Left ventricle myocardium inferior (tissue), 1 donor: ENCODE measurements at regions of chr3 and their contacts with region 1.

Region 1: GRCh38 chr3:111859974-111860859 is 1.2 kb downstream of the PHLDB2 start:
- DNase-seq: peak; percentile 76
- H3K4me3 ChIP-seq: peak overlapping the region; percentile 77
- H3K27ac ChIP-seq: peak overlapping the region; percentile 94
- H3K4me1 ChIP-seq: peaks cover 73% of the 10 kb centered on the region
- H3K27me3 ChIP-seq: no peaks in the 10 kb centered on the region
- CTCF ChIP-seq: peak; percentile 78

Region 2: DNA sequence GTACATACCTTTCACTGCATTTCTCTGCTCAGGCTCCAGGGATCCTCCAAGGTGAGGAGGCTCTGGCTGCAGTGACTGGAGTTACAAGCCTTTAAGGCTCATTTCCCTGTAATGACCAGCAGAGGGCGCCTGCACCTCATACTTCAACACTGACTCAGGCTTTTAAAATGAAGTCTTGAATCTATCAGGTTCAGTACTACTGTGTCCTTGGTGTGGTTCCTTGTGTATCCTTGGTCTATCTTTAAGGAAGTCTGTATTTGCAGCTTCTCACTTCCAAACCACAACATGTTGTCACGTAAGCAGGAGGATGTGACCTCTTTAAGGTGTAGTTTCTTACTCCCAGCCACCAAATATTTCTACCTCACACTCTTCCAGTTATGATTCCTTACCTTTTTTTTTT is 142.6 kb before region 1 on chr3:
- intact Hi-C with region 1: loop called (anchors 5 kb)
- DNase-seq: peak; percentile 60
- H3K4me3 ChIP-seq: no peak overlapping the region
- H3K27ac ChIP-seq: peak overlapping the region; percentile 67
- H3K4me1 ChIP-seq: peaks cover 49% of the 10 kb centered on the region
- H3K27me3 ChIP-seq: no peaks in the 10 kb centered on the region
- CTCF ChIP-seq: peak; percentile 98

Region 3: GRCh38 chr3:111737706-111738086 is 122.5 kb before region 1 on chr3:
- intact Hi-C with region 1: loop called (anchors 5 kb)
- DNase-seq: peak; percentile 31
- H3K4me3 ChIP-seq: no peak overlapping the region
- H3K27ac ChIP-seq: peak overlapping the region; percentile 92
- H3K4me1 ChIP-seq: peaks cover 70% of the 10 kb centered on the region
- H3K27me3 ChIP-seq: no peaks in the 10 kb centered on the region
- CTCF ChIP-seq: no peak

Region 4: DNA sequence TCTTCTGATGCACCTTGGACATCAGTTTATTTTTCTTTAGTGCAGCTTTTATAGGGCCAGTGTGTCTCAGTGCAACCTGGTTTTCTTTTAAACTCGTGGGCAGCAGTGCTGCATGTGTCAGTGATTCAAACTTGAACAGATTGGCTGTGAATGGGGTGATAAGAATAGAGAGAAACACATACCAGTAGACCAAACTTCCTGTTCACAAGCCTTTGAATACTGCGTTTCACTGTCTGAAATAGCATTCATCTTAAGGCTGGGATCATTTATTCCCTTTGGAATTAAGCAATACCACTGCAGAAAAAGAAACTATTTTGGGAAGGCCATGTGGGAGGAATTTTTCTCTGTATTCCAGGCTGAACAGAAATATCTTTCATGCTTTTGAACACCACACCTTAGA is 50.6 kb after region 1 on chr3:
- intact Hi-C with region 1: loop called (anchors 10 kb)
- DNase-seq: no peak
- H3K4me3 ChIP-seq: no peak overlapping the region
- H3K27ac ChIP-seq: peak overlapping the region; percentile 66
- H3K4me1 ChIP-seq: peaks cover 96% of the 10 kb centered on the region
- H3K27me3 ChIP-seq: no peaks in the 10 kb centered on the region
- CTCF ChIP-seq: no peak

Region 5: DNA sequence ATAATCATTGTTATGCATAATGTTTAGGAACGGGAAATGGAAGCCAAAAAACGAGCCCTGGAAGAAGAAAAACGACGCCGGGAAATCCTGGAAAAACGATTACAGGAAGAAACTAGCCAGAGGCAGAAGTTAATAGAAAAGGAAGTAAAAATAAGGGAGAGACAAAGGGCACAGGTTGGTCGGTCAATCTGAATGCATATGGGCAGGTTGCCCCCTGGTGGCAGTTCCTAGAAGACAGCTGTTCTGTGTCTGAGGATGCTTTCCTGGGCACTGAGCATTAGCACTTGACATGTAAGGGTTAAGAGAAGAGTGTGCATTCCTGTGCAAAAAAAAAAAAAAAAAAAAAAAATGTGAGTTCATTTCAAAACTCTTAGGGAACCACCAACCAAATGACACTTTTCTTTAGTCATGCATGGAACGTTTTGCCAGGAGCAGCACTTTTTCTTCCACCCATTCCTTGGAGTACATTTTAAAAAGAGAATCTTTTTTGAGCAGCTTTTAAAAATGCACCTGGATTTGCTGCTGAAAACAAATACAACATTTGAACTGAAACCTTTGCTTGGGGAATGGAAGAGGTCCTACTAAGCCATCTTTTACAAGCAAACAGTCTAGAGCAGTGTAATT is 107.5 kb after region 1 on chr3:
- intact Hi-C with region 1: loop called (anchors 5 kb)
- DNase-seq: peak; percentile 76
- H3K4me3 ChIP-seq: no peak overlapping the region
- H3K27ac ChIP-seq: peak overlapping the region; percentile 71
- H3K4me1 ChIP-seq: peaks cover 65% of the 10 kb centered on the region
- H3K27me3 ChIP-seq: no peaks in the 10 kb centered on the region
- CTCF ChIP-seq: peak; percentile 91

Region 6: GRCh38 chr3:112061152-112061551 is 200.9 kb after region 1 on chr3:
- intact Hi-C with region 1: no loop called
- DNase-seq: no peak
- H3K4me3 ChIP-seq: no peak overlapping the region
- H3K27ac ChIP-seq: no peak overlapping the region
- H3K4me1 ChIP-seq: no peaks in the 10 kb centered on the region
- H3K27me3 ChIP-seq: peaks cover 9% of the 10 kb centered on the region
- CTCF ChIP-seq: no peak